PC-9 (cell line): ENCODE measurements at regions of chr6 and their contacts with region 1.

Region 1: DNA sequence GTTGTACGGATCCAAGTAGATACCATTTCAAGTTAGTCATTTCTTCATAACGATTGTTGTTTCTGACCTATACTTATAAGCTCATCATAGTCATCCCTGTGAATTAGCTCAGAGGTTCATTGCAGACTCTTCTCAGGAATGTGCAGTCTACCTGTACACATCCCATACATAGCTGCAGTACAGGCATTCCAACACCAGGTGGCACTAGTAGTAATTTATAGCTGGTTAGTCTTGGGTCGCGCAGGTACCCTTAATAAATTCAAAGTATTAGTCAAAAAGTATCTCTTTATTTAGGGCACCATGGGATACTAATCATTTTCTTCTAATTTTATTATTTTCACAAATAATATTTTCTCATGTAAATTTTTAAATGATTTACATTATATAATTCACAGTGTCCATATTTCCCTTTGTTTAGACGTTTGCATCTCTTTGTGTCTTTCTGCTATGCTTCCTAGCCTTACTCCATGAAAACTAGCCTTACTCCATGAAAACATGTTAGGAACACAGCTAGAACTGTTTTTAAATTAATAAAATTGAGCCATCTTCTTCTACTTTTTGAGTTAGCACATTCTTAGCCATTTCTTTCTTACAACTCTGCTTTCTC is 128.6 kb upstream of the FAM83B start:
- DNase-seq: peak; percentile 59 to 69
- H3K4me3 ChIP-seq: no peak overlapping the region
- H3K27ac ChIP-seq: no peak overlapping the region
- H3K4me1 ChIP-seq: no peaks in the 10 kb centered on the region
- H3K27me3 ChIP-seq: no peaks in the 10 kb centered on the region
- CTCF ChIP-seq: peak; percentile 91

Region 2: GRCh38 chr6:54992789-54993188 is 274.8 kb after region 1 on chr6:
- CTCF ChIA-PET with region 1: no interaction called
- POLR2A ChIA-PET with region 1: no interaction called
- intact Hi-C with region 1: loop called (anchors 10 kb)
- DNase-seq: no peak
- H3K4me3 ChIP-seq: no peak overlapping the region
- H3K27ac ChIP-seq: no peak overlapping the region
- H3K4me1 ChIP-seq: no peaks in the 10 kb centered on the region
- H3K27me3 ChIP-seq: no peaks in the 10 kb centered on the region
- CTCF ChIP-seq: peak; percentile 79

Region 3: GRCh38 chr6:55069132-55069781 is 351.3 kb after region 1 on chr6:
- CTCF ChIA-PET with region 1: interaction called, 8 read pairs
- POLR2A ChIA-PET with region 1: no interaction called
- intact Hi-C with region 1: loop called (anchors 2 kb)
- DNase-seq: peak in 1 of 2 experiments; percentile 18
- H3K4me3 ChIP-seq: no peak overlapping the region
- H3K27ac ChIP-seq: no peak overlapping the region
- H3K4me1 ChIP-seq: no peaks in the 10 kb centered on the region
- H3K27me3 ChIP-seq: no peaks in the 10 kb centered on the region
- CTCF ChIP-seq: peak; percentile 86